ENCODE measurements at regions of chr17 and their contacts with region 1.

Region 1: DNA sequence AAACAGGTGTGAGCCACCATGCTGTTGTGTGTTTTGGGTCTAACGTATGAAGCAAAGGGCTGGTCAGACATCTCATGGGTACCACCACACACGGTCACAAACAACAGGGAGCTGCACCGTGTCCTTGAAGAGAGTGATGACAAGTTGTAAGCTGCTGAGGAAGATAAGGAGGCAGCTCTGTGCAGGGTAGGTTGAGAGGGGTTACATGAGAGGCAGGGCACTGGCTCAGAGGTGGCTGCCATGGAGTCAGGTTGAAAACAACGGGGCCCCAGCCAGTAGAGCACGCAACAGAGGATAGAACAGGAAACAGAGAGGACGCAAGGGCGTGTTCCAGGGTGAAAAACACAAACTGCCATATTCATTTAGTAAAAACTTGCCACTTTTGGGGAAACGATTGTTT is 52.2 kb downstream of the TRARG1 start:
- DNase-seq: peak; percentile 79
- H3K4me3 Mint-ChIP-seq: peak overlapping the region; percentile 38
- H3K27ac Mint-ChIP-seq: no peak overlapping the region
- H3K4me1 Mint-ChIP-seq: peaks cover 6% of the 10 kb centered on the region
- H3K27me3 Mint-ChIP-seq: no peaks in the 10 kb centered on the region

Region 2: GRCh38 chr17:1122533-1123392 is 208.9 kb before region 1 on chr17:
- intact Hi-C with region 1: loop called (anchors 5 kb)
- DNase-seq: peak; percentile 96
- H3K4me3 Mint-ChIP-seq: no peak overlapping the region
- H3K27ac Mint-ChIP-seq: no peak overlapping the region
- H3K4me1 Mint-ChIP-seq: peaks cover 6% of the 10 kb centered on the region
- H3K27me3 Mint-ChIP-seq: no peaks in the 10 kb centered on the region

Region 3: GRCh38 chr17:1260086-1260769 is 71.5 kb before region 1 on chr17:
- intact Hi-C with region 1: loop called (anchors 1 kb)
- DNase-seq: no peak
- H3K4me3 Mint-ChIP-seq: peak overlapping the region; percentile 24
- H3K27ac Mint-ChIP-seq: no peak overlapping the region
- H3K4me1 Mint-ChIP-seq: peaks cover 18% of the 10 kb centered on the region
- H3K27me3 Mint-ChIP-seq: peaks cover 43% of the 10 kb centered on the region

Region 4: DNA sequence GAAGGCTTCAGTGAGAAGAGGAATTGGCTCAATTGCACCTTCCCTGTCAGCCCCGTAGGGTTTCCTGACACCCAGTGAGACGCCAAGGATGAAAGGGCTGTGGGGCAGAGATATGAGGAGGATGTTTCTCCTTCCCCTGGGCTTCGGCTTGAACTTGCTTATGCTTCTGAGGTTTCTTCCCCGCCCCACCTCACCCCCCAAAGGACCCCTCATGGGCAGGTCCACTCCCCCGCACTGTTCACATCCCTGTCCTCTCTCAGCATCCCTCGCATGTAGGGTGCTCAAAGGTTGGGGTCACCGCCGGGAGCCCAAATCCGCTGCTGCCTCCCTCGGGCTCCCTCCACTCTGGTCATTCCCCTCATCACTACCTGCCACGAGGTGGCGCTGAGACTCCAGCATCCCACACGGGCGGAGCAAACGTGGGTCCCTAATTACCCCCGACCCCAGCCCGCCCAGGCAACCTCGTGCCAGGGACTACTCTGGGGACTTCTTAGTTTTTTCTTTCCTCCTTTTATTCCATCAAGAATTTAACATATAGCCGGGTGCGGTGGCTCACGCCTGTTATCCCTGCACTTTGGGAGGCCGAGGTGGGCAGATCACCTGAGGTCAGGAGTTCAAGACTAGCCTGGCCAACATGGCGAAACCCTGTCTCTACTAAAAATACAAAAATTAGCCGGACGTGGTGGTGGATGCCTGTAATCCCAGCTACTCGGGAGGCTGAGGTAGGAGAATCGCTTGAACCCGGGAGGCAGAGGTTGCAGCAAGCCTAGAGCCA is 55.6 kb before region 1 on chr17:
- intact Hi-C with region 1: loop called (anchors 1 kb)
- DNase-seq: peak; percentile 93
- H3K4me3 Mint-ChIP-seq: peak overlapping the region; percentile 61
- H3K27ac Mint-ChIP-seq: peak overlapping the region; percentile 53
- H3K4me1 Mint-ChIP-seq: peaks cover 16% of the 10 kb centered on the region
- H3K27me3 Mint-ChIP-seq: peaks cover 36% of the 10 kb centered on the region

Region 5: DNA sequence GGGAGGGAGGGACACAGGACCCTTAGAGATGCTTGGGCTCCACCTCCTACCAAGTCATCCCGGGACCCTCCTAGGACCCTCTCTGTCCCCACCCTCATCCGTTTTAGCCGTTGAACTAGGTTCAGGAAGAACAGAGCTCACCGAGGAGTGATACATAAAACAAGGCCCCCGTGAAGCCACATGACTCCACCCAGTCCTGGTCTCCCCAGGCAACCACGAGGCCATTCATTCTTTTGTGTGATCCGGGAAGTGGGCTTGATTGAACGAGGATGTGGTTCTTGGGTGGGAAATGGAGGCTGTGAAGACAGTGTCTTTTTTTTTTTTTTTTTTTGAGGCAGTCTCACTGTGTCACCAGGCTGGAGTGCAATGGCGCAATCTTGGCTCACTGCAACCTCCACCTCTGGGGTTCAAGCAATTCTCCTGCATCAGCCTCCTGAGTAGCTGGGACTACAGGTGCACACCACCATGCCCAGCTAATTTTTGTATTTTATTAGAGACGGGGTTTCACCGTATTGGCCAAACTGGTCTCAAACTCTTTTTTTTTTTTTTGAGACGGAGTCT is 37.5 kb before region 1 on chr17:
- intact Hi-C with region 1: loop called (anchors 1 kb)
- DNase-seq: peak; percentile 97
- H3K4me3 Mint-ChIP-seq: peak overlapping the region; percentile 56
- H3K27ac Mint-ChIP-seq: peak overlapping the region; percentile 90
- H3K4me1 Mint-ChIP-seq: peaks cover 60% of the 10 kb centered on the region
- H3K27me3 Mint-ChIP-seq: no peaks in the 10 kb centered on the region